ENCODE measurements at regions of chr2 and their contacts with region 1.

Region 1: DNA sequence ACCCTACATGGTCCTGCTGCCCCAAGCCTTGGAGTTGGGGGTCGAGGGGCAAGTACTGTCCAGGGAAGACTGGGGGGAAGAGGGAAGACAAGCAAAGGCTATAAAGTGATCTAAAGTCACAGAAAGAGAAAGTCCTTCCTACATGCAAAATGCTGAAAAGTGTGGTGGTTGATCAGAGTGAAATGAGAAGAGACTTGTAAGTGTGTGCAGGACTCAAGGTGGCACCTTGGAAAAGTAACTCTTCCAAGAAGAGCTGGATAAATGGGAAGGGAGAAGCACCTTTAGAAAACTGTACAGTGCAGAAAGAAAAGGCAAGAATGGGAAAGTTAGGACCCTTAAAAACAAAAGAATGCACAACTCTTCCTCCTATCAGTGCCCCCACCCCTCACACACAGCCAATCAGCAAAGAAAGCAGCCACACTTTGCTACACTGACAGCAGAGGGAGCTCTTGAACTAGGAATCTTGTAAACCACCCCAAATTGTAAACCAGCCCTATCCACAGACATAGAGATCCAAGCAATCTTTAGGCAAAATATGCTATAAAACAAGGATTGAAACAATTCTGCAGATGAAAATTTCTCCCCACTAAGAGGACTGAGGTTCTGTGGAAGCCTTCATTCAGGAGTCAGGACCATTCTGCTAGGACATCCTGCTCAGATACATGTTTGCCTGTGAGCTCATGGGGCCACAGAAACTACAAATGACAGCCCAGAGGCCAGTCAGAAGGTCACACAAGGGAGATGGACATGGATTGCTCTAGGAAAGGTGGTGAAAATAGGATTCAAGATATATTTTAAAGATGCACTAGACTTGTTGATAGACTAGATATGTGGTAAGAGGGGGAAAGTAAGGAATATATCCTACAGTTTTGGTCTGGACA is 146.4 kb downstream of the FTCDNL1 start:
- DNase-seq: peak; percentile 36
- ATAC-seq: peak; percentile 98
- H3K4me3 ChIP-seq: no peak overlapping the region
- H3K27ac ChIP-seq: no peak overlapping the region
- H3K4me1 ChIP-seq: no peaks in the 10 kb centered on the region
- H3K27me3 ChIP-seq: 0 out of 2 replicates have a peak, but pooled peaks cover 3% of the 10 kb centered on the region
- CTCF ChIP-seq: peak; percentile 63 to 80 (median 74); a peak in 5 of 6 replicates
- POLR2A ChIP-seq: no peak
- RAD21 ChIP-seq: peak; percentile 85

Region 2: DNA sequence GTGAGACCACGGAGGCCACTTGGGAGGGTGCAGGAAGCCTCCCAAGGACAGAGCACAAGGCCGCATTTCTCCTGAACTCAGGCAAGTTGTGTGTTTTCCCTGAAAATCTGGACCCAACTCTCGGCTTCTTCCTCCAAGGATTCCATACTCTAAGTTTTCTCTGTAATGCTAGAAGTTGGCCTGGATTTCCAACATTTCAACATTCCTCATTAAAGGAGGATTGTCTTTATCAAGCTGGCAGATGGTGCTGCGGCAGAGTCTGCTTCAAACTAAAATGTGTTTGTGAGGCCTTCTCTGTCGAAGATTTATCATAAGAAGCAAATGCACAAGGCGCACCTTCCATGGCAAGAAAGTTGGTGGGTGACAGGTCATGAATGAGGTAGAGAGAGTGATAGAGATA is 152.5 kb before region 1 on chr2:
- CTCF ChIA-PET with region 1: no interaction called
- POLR2A ChIA-PET with region 1: no interaction called
- RAD21 ChIA-PET with region 1: no interaction called
- intact Hi-C with region 1: no loop called
- DNase-seq: no peak
- ATAC-seq: no peak
- H3K4me3 ChIP-seq: no peak overlapping the region
- H3K27ac ChIP-seq: no peak overlapping the region
- H3K4me1 ChIP-seq: no peaks in the 10 kb centered on the region
- H3K27me3 ChIP-seq: no peaks in the 10 kb centered on the region
- CTCF ChIP-seq: no peak
- POLR2A ChIP-seq: no peak
- RAD21 ChIP-seq: no peak

Region 3: DNA sequence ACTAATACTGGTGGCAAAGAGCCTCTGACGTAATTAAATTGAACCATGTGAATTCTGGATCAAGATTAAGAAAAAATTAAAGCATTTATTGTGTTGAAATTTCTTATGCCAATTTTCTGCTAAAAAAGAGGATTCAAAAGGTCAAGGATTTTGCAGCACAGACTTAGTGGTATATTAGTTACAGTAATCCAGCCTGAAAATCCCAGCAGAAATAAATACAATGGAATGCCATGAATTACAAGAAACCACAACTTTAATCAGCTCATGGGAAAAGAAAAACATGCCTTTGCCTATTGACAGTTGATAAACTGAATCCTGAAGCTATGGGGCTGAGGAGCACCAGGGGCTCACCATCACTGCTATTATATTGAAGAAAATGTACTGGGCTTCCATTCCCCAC is 132.0 kb before region 1 on chr2:
- CTCF ChIA-PET with region 1: no interaction called
- POLR2A ChIA-PET with region 1: no interaction called
- RAD21 ChIA-PET with region 1: no interaction called
- intact Hi-C with region 1: no loop called
- DNase-seq: no peak
- ATAC-seq: no peak
- H3K4me3 ChIP-seq: no peak overlapping the region
- H3K27ac ChIP-seq: no peak overlapping the region
- H3K4me1 ChIP-seq: no peaks in the 10 kb centered on the region
- H3K27me3 ChIP-seq: no peaks in the 10 kb centered on the region; the same call in 1 of the 2 replicates
- CTCF ChIP-seq: no peak
- POLR2A ChIP-seq: no peak
- RAD21 ChIP-seq: no peak

Region 4: DNA sequence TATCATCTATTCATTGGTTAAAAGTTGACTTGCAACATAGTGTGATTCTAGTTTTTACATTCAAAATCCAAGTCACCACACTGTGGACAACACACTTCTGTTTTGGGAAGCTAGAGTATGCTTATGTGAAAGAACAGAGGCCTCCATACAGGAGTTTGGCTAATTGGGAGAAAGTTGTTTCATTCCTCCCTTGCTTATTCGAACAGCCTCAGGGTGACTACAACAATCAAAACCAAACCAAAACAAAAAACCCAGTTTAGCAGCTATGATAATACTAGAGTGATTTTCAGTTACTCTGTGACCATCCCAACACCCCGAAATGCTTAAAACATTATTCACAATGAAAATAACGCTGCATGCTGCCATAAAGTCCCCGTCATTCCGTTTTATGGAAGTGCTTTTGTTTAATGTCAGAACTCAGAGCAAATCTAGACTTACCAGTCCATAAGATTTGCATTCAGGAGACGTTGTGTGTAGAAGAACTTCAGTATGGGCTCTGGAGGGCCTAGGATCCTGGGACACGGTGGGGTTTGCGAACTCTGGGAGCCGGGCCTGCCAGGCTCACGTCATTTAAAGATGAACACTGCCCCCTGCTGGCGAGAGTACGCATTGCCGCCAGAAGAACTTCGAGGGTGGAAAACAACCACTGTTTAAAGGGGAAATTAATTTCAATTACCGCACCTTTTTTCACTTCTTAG is 35.0 kb after region 1 on chr2:
- CTCF ChIA-PET with region 1: interaction called, 22 read pairs
- POLR2A ChIA-PET with region 1: no interaction called
- RAD21 ChIA-PET with region 1: interaction called in 1 of 2 experiments, 4 read pairs
- intact Hi-C with region 1: loop called (anchors 1 kb)
- DNase-seq: peak; percentile 42
- ATAC-seq: peak; percentile 89
- H3K4me3 ChIP-seq: no peak overlapping the region
- H3K27ac ChIP-seq: no peak overlapping the region
- H3K4me1 ChIP-seq: no peaks in the 10 kb centered on the region
- H3K27me3 ChIP-seq: peaks cover 8% of the 10 kb centered on the region; the same call in 1 of the 2 replicates
- CTCF ChIP-seq: peak; percentile 78 to 97 (median 89)
- POLR2A ChIP-seq: no peak
- RAD21 ChIP-seq: peak; percentile 87

Region 5: DNA sequence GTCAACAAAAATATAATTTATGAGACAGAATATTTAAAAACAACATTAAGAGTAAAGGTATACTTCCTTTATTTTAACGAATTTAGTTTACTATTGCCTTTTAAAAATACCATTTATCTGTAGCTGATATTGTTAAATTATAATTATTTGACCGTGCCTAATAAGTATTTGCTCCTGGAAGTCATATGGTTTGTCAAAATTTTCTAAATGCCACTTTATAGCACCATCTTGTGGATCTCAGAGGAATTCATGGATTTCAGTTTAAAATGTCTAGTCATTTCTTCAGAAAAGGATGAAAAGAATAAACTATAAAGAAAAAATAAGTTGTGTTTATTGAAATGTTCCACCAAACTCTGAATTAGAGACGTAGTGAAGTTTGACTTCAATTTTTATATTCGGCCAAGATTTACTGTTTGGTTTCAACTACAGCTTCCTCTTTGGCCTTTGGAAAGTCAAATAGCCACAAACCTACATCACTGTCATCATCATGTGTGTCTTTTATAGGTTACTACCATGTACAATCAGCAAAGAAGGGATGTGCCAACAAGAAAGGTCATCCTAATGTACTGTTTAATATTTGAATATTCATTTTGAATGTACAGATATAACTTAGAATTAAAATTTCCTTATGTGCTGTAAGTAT is 156.7 kb after region 1 on chr2:
- CTCF ChIA-PET with region 1: interaction called, 3 read pairs
- POLR2A ChIA-PET with region 1: no interaction called
- RAD21 ChIA-PET with region 1: no interaction called
- intact Hi-C with region 1: loop called (anchors 1 kb)
- DNase-seq: peak; percentile 19
- ATAC-seq: peak; percentile 61
- H3K4me3 ChIP-seq: no peak overlapping the region
- H3K27ac ChIP-seq: no peak overlapping the region
- H3K4me1 ChIP-seq: no peaks in the 10 kb centered on the region
- H3K27me3 ChIP-seq: no peaks in the 10 kb centered on the region
- CTCF ChIP-seq: peak; percentile 54 to 70 (median 67); a peak in 5 of 6 replicates
- POLR2A ChIP-seq: no peak
- RAD21 ChIP-seq: peak; percentile 76

Region 6: GRCh38 chr2:199940373-199940772 is 235.8 kb after region 1 on chr2:
- CTCF ChIA-PET with region 1: interaction called, 26 read pairs
- POLR2A ChIA-PET with region 1: no interaction called
- RAD21 ChIA-PET with region 1: no interaction called
- intact Hi-C with region 1: loop called (anchors 1 kb)
- DNase-seq: peak; percentile 21
- ATAC-seq: peak; percentile 73; the same call in 1 of the 2 replicates
- H3K4me3 ChIP-seq: no peak overlapping the region
- H3K27ac ChIP-seq: no peak overlapping the region
- H3K4me1 ChIP-seq: no peaks in the 10 kb centered on the region
- H3K27me3 ChIP-seq: no peaks in the 10 kb centered on the region
- CTCF ChIP-seq: peak; percentile 18 to 48 (median 33); a peak in 4 of 6 replicates
- POLR2A ChIP-seq: no peak
- RAD21 ChIP-seq: peak; percentile 63

Measured in HCT116 (cell line).